Common myeloid progenitor, CD34-positive (primary cell): ENCODE measurements at regions of chr11 and their contacts with region 1.

Region 1: GRCh38 chr11:15189641-15190365 is 75.1 kb downstream of the INSC start:
- DNase-seq: no peak
- H3K4me3 ChIP-seq: no peak overlapping the region
- H3K27ac ChIP-seq: no peak overlapping the region
- H3K4me1 ChIP-seq: no peaks in the 10 kb centered on the region
- H3K27me3 ChIP-seq: peaks cover 0 to 6% (median 3%) of the 10 kb centered on the region in 5 experiments

Region 2: DNA sequence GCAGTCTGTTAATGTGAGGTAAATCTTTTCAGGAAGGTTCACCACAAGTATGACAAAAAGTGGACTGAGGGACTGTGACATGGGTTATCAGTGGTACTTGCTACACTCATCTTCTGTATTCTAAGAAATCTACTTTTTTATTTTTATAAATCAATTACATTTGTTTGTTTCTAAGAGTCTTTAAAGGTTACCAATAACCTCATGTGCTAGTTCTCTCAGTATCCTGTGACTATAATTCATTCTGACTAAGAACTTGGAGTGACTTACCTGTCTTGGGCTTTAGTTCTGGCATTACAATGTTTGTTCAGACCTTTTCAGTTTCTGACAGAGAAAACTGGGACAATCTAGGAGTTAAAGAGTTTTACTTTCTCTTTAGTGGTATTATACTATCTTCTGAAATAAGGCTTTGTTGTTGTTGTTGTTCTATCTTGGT is 437.8 kb before region 1 on chr11:
- CTCF ChIA-PET with region 1: no interaction called
- POLR2A ChIA-PET with region 1: no interaction called
- DNase-seq: no peak
- H3K4me3 ChIP-seq: no peak overlapping the region
- H3K27ac ChIP-seq: no peak overlapping the region
- H3K4me1 ChIP-seq: peaks cover 0 to 6% (median 0%) of the 10 kb centered on the region in 4 experiments
- H3K27me3 ChIP-seq: peaks cover 0 to 21% (median 14%) of the 10 kb centered on the region in 5 experiments

Region 3: GRCh38 chr11:15179167-15179566 is 10.6 kb before region 1 on chr11:
- CTCF ChIA-PET with region 1: interaction called, 10 read pairs
- POLR2A ChIA-PET with region 1: no interaction called
- DNase-seq: no peak
- H3K4me3 ChIP-seq: no peak overlapping the region
- H3K27ac ChIP-seq: no peak overlapping the region
- H3K4me1 ChIP-seq: no peaks in the 10 kb centered on the region
- H3K27me3 ChIP-seq: peaks cover 0 to 3% (median 0%) of the 10 kb centered on the region in 5 experiments